Activated CD4-positive, alpha-beta T cell treated with anti-CD3 and anti-CD28 coated beads, Interleukin-2, amount 10 ng/mL, durations not matched to agents 24 days and 14 days (primary cell): ENCODE measurements at regions of chr3 and their contacts with region 1.

Region 1: GRCh38 chr3:112642912-112643506 is 2.1 kb upstream of the CCDC80 start:
- DNase-seq: peak; percentile 94
- H3K4me3 Mint-ChIP-seq: peak overlapping the region; percentile 78
- H3K27ac Mint-ChIP-seq: peak overlapping the region; percentile 34
- H3K4me1 Mint-ChIP-seq: peaks cover 21% of the 10 kb centered on the region
- H3K27me3 Mint-ChIP-seq: peaks cover 11% of the 10 kb centered on the region

Region 2: DNA sequence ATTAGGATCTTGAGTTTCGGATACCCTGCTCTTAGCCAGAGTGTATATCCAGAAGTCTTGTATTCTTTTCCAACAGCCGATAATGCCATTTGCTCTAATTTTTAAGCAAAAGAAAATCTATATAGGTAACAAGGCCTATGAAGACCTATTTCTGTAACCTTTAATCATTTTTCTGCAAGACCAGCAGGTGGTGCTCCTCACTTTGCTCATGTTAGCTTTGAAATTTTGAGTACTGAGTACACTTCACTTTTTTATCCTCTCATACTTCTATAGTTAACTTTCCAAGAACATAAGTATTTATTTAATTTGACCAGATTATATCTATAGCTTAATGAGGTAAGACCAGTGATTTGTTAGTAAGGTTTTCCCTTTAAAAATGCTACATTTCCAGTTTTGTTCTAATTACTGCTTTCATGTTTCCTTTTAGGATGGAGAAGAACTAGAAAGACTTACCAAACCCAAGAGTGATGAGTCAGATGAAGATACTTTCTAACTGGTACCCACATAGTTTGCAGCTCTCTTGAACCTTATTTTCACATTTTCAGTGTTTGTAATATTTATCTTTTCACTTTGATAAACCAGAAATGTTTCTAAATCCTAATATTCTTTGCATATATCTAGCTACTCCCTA is 60.6 kb before region 1 on chr3:
- intact Hi-C with region 1: loop called (anchors 2 kb)
- DNase-seq: peak; percentile 79
- H3K4me3 Mint-ChIP-seq: no peak overlapping the region
- H3K27ac Mint-ChIP-seq: no peak overlapping the region
- H3K4me1 Mint-ChIP-seq: peaks cover 3% of the 10 kb centered on the region
- H3K27me3 Mint-ChIP-seq: no peaks in the 10 kb centered on the region

Region 3: GRCh38 chr3:112794622-112795172 is 151.7 kb after region 1 on chr3:
- intact Hi-C with region 1: no loop called
- DNase-seq: no peak
- H3K4me3 Mint-ChIP-seq: no peak overlapping the region
- H3K27ac Mint-ChIP-seq: no peak overlapping the region
- H3K4me1 Mint-ChIP-seq: peaks cover 14% of the 10 kb centered on the region
- H3K27me3 Mint-ChIP-seq: no peaks in the 10 kb centered on the region

Region 4: DNA sequence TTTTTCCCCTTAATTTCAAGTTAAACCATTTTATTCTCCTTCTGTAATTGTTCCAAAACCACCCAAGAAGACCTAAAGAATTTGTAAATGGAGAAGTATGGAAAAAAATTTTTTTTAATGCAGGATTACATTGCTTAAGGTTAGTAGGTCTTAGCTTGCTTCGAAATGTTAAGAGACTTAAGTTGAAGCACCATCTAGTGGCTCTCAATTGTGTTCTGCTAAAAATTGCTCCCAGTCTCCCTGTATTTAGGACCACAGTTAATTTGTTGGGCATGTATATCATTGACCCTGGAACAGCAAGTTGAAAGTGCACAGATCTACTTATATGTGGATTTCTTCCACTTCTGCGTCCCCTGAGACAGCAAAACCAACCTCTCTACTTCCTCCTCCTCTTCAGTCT is 171.3 kb after region 1 on chr3:
- intact Hi-C with region 1: loop called (anchors 1 kb)
- DNase-seq: no peak
- H3K4me3 Mint-ChIP-seq: no peak overlapping the region
- H3K27ac Mint-ChIP-seq: no peak overlapping the region
- H3K4me1 Mint-ChIP-seq: peaks cover 17% of the 10 kb centered on the region
- H3K27me3 Mint-ChIP-seq: peaks cover 3% of the 10 kb centered on the region